ENCODE measurements at regions of chr15 and their contacts with region 1.

Region 1: DNA sequence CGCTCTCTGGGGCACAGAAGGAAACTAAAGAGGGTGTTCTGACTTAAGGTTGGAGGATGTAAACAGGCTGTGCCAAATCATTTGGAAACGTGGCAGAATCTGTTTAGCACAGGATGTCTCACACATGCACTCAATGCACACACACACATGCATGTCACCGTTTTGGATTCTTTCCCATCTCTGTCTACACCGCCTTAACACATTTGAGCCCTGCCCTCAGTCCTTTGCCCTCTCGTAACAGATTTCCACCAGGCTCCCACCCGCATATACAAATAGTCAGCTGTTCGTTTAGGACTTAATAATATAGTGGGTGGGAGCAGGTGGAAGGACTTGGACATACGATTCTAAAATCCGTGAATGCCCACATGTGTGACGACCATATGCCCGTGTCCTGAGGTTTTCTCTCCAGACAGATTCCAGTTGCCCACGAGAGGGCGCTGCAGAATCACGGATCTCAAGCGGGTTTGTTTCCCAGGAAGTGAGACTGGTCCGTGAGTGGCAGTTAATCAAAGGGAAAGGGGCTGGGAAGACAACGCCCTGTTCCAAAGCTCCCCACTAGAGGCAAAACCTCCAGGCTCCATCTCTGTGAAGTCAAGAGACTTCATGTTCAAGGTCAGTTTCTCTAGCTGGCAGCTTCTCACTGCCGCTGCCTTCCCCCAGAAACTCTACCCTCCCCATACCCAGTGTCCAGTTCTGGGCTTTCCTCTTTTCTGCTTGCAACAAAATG is 44.5 kb downstream of the NOX5 start:
- DNase-seq: peak in 1 of 2 donors; percentile 90
- H3K4me3 ChIP-seq: peak overlapping the region in 1 of 2 donors; percentile 31
- H3K27ac ChIP-seq: no peak overlapping the region
- H3K4me1 ChIP-seq: peaks cover 0 to 7% of the 10 kb centered on the region in 2 donors
- H3K27me3 ChIP-seq: no peaks in the 10 kb centered on the region
- CTCF ChIP-seq: peak; percentile 84 to 91 (median 85)

Region 2: DNA sequence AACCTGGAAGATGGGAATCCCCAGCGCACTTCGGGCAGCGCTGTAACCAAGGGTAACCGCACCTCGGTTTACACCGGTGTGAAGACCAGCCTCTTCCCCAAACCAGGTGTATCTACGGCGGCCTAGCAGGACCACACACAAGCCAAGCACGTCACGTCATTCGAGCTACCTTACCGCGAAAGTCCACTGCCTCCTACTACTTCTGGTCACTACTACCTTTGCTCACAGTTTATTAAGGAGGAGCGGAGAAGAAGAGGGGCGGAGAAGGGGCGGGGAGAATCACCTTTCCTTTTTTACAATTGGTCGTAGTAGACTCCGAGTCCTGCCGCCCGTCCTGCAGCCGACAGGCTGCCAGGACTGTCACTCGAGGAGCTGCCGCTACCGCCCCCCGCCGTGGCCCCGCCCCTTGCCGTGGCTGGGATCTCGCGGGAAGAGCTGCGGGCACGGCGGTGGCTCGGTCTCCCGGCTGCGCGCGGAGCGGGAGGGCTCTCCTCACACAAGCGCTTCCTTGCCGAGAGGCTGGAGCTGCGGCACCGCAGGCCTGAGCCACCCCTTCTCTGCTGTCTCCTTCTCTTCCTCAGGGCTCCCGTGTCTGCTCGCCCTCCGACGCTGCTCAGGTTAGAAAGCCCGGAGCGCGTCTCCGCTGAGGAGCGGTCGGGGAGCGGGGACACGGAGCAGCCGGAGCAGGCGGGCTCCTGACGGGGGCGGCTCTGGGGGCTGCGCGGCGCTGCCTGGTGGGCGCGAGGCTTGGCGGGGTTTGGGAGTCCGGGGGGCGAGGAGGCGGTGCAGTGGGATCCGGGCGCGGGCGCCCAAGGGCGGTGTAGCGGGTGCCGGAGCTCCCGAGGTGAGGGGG is 101.4 kb after region 1 on chr15 and contains the start of gene GLCE:
- intact Hi-C with region 1: no loop called
- DNase-seq: peak; percentile 86 to 96
- H3K4me3 ChIP-seq: peak within 1 kb of the TSS; percentile 77 to 91
- H3K27ac ChIP-seq: peak within 1 kb of the TSS; percentile 29 to 57
- H3K4me1 ChIP-seq: peaks cover 3 to 4% of the 10 kb centered on the region in 2 donors
- H3K27me3 ChIP-seq: no peaks in the 10 kb centered on the region
- CTCF ChIP-seq: no peak
- total RNA-seq, gene GLCE: 13.9 TPM

Region 3: GRCh38 chr15:69225355-69226025 is 166.5 kb after region 1 on chr15:
- intact Hi-C with region 1: loop called (anchors 1 kb)
- DNase-seq: no peak
- H3K4me3 ChIP-seq: no peak overlapping the region
- H3K27ac ChIP-seq: no peak overlapping the region
- H3K4me1 ChIP-seq: no peaks in the 10 kb centered on the region
- H3K27me3 ChIP-seq: no peaks in the 10 kb centered on the region
- CTCF ChIP-seq: peak in 2 of 3 experiments; percentile 28 to 39

Region 4: DNA sequence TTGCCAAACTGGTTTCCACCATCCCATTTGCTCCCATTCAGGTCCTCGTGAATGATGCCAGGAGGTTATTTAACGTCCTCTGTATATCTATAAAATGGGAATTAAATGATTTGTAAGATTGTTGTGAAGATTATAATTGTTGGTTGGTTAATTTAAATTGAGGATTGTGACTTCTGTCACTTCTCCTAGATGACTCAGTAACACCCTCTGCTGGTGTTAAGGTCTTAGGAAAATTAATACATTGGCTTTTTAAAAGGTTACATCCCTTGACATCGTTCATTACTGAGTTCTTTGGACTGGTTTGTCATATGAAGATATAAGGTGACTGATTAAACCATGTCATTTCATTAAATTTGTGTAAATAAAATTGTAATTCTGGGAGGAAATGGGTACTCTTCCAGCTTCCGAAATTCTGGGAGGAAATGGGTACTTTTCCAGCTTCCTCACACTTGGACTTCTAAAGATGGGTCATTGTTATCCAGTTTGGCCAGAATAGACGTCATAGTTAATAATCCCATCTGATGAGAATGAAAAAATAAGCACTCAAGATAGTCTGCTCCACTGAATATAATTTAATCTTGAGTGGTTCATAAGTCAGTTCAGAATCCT is 206.5 kb after region 1 on chr15:
- intact Hi-C with region 1: loop called (anchors 1 kb)
- DNase-seq: no peak
- H3K4me3 ChIP-seq: no peak overlapping the region
- H3K27ac ChIP-seq: no peak overlapping the region
- H3K4me1 ChIP-seq: no peaks in the 10 kb centered on the region
- H3K27me3 ChIP-seq: no peaks in the 10 kb centered on the region
- CTCF ChIP-seq: peak; percentile 8 to 50 (median 35)

Region 5: DNA sequence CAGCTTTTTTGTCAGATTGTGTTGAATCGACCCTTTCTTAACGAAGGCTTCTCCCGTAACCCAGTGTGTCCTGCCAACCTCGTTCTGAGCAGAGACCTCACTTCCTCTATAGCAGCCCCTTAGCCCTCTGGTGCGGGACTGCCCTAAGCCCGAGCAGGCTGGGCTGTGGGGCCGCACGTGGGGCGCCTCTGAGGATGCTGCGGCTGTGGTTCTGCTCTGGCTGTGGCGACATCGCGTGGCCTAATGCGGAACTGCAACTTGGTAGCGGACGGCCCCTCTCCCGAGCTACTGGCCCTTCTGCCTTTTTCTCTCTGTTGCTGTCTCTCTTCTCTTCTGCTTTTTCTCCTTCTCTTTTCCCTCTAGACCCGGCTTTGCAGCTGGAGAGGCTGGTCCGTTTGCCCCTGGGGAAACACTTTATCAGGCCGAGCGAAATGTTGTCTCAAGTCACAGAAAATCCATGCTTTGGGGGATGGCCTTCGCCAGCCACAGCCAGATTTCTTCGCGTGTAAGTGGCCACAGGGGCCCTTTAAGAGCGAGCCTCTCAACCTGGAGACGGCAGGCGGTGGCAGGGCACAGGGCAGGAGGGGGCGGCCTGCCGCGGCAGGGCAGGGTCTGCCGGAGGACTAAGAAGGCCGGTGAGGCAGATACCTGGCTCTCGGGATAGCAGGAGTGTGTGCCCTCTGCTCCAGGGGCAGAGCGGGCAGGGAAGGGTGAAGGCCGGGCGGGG is 335.7 kb after region 1 on chr15:
- intact Hi-C with region 1: loop called (anchors 1 kb)
- DNase-seq: peak in 1 of 2 donors; percentile 85
- H3K4me3 ChIP-seq: peak overlapping the region; percentile 19 to 46
- H3K27ac ChIP-seq: no peak overlapping the region
- H3K4me1 ChIP-seq: peaks cover 0 to 7% of the 10 kb centered on the region in 2 donors
- H3K27me3 ChIP-seq: no peaks in the 10 kb centered on the region
- CTCF ChIP-seq: peak; percentile 78 to 99 (median 98)

Measured in ascending aorta (tissue), 2 donors.